ENCODE measurements at regions of chr2 and their contacts with region 1.

Region 1: DNA sequence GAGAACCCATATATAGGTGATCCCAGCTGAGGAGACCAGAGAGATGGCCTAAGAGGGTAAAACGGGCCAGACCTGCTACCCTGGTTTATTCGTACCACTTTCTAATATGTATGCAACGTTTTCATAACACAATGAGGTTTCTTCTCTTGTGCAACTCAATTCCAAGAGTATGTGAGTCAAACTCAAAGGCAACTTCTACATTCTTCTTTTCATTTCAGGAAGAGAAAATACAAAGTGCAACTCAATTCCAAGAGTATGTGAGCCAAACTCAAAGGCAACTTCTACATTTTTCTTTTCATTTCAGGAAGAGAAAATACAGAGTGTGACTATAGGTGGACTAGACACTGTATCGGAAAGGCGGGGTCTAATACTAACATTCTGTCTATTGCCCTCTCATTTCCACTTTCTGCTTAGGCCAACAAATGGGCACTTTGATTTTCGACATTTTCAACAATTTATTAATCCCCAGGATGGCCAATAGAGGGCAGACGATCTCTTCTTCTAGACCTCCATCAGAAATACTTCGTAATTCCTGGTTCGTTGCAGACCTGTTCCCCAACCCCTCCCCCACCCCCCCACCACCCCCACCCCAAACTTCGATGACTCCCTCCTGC is 3.7 kb upstream of the CRIM1 start:
- DNase-seq: no peak
- H3K4me3 ChIP-seq: no peak overlapping the region
- H3K27ac ChIP-seq: no peak overlapping the region
- H3K4me1 ChIP-seq: peaks cover 6 to 24% of the 10 kb centered on the region in 2 donors
- H3K27me3 ChIP-seq: no peaks in the 10 kb centered on the region
- CTCF ChIP-seq: peak in 5 of 6 experiments; percentile 35 to 71 (median 63)
- POLR2A ChIP-seq: no peak

Region 2: GRCh38 chr2:36482576-36483214 is 130.9 kb after region 1 on chr2:
- intact Hi-C with region 1: loop called (anchors 5 kb)
- DNase-seq: peak; percentile 59 to 68
- H3K4me3 ChIP-seq: no peak overlapping the region
- H3K27ac ChIP-seq: peak overlapping the region in 1 of 3 donors; percentile 34
- H3K4me1 ChIP-seq: peaks cover 42 to 65% of the 10 kb centered on the region in 2 donors
- H3K27me3 ChIP-seq: no peaks in the 10 kb centered on the region
- CTCF ChIP-seq: no peak
- POLR2A ChIP-seq: no peak

Region 3: GRCh38 chr2:36770542-36771287 is 418.9 kb after region 1 on chr2:
- intact Hi-C with region 1: no loop called
- DNase-seq: peak in 1 of 2 donors; percentile 3
- H3K4me3 ChIP-seq: no peak overlapping the region
- H3K27ac ChIP-seq: no peak overlapping the region
- H3K4me1 ChIP-seq: peaks cover 0 to 9% of the 10 kb centered on the region in 2 donors
- H3K27me3 ChIP-seq: no peaks in the 10 kb centered on the region
- CTCF ChIP-seq: peak in 2 of 6 experiments; percentile 13 to 30
- POLR2A ChIP-seq: no peak

Measured in thyroid gland (tissue), 4 donors.